ENCODE measurements at regions of chr6 and their contacts with region 1.

Region 1: DNA sequence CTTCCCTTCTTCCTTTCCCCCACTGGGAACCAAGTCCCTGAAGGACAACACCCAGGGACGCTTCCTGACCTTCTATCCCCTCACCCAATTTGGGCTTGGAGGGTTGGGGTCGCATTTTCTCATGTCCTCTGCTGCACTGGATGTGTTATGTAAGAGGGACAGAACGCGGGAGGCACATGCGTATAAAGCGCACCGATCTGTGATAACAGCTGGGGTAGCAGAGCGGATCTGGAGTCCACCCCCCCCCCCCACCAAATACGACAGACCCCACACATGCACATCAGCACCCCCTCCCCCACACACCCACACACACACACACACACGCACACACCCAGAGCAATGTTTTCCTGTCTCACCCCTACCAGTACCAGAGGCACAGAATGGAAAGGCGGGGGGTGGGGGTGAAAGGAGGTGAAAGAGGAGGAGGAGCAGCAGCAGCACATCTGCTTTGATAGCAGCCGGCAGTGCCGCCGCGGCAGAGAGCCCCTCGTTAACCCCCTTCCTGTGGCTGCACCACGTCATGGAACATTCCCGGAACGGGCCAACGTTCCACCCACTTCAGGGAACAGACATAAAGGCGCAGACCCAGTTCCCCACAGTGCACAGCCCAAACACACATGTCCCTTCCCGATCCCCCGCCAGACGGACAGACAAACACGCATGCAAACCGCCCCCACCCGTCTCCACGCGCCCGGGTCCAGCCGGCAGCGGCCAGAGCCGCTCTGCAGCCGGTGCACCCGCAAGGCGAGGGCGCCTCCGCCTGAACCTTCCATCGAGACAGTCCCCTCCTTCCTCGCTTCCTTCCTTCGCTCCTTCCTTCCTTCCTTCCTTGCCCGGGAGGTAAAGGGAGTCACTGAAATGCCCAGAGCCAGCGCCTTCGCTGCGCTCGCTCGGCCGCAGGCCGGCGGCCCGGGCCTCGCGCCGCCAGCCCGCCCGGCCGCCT is 581 bp downstream of the HIVEP2 start:
- DNase-seq: peak; percentile 94
- H3K4me3 Mint-ChIP-seq: peak overlapping the region; percentile 99
- H3K27ac Mint-ChIP-seq: peak overlapping the region; percentile 99
- H3K4me1 Mint-ChIP-seq: peaks cover 55% of the 10 kb centered on the region
- H3K27me3 Mint-ChIP-seq: no peaks in the 10 kb centered on the region

Region 2: DNA sequence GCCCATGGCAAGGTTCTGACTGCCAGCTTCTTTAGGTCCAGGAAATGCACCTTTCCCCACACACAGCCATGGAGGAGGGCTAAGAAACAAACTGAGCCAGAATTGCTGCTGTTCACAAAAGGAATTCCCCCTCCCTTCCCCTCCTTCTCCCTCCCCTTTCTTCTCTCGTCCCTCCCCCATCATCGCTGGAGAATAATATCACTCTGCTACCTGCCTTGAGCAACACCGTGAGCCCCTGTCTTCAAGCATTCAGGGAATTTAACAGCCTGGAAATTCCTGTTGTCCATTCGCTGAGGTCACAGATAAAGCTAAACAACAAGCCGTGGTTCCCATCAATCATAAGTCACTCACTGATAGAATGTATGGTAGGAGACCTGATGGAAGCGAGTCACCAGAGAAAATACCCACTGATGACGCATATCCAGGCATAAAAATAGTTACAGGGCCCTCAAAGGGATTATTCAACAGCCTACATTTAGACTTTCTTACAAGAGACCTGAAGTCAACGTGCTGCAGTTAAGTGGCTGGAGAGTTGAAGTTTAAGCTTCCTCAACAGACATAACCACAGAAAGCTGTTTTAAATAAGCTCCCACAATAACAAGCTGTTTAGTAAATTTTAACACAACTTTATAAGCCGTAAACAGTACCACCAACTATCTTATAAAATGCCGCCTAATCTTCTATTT is 59.1 kb before region 1 on chr6:
- CTCF ChIA-PET with region 1: interaction called, 11 read pairs
- DNase-seq: peak; percentile 51
- H3K4me3 Mint-ChIP-seq: peak overlapping the region; percentile 94
- H3K27ac Mint-ChIP-seq: peak overlapping the region; percentile 99
- H3K4me1 Mint-ChIP-seq: peaks cover 82% of the 10 kb centered on the region
- H3K27me3 Mint-ChIP-seq: no peaks in the 10 kb centered on the region

Region 3: DNA sequence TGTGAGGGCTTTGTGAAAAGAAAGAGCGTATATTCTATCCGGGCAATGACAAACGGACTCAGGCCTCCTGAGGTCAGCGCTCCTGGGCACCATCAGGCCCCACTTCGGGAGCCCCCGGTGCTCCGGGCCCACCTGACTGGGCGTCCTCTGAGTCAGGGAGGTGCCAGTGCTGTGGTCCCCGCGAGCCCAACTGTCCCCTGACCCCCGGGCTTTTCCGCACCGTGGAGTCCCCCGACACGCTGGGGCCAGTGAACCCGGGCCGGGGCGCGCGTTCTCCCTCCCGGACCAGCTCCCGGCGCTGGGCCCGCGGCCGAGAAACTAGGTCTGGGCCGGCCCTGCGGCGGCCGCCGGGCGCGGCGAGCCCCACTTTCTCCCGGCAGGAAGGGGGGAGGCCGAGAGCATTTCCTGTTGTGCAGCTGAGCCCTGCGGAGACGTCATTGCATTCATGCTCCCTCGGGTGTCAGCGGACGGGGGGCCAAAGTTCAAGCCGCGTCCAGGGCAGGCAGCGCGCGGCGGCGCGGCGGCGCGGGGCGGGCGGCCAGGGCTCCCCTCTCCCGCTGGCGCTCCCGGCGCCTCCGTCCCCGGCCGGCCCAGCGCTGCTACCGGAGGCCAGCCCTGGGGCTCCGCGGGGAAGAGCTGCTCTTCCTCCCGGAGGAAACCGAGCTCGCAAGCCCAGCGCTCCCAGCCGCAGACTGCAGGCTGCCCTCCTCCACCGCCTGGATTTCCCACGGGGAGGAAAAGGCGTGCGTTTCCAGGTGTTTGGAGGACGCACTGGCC is 17.7 kb before region 1 on chr6:
- CTCF ChIA-PET with region 1: interaction called, 39 read pairs
- DNase-seq: peak; percentile 91
- H3K4me3 Mint-ChIP-seq: peak overlapping the region; percentile 93
- H3K27ac Mint-ChIP-seq: peak overlapping the region; percentile 93
- H3K4me1 Mint-ChIP-seq: peaks cover 57% of the 10 kb centered on the region
- H3K27me3 Mint-ChIP-seq: no peaks in the 10 kb centered on the region

Region 4: GRCh38 chr6:142960098-142960497 is 15.7 kb after region 1 on chr6:
- CTCF ChIA-PET with region 1: no interaction called
- DNase-seq: no peak
- H3K4me3 Mint-ChIP-seq: no peak overlapping the region
- H3K27ac Mint-ChIP-seq: no peak overlapping the region
- H3K4me1 Mint-ChIP-seq: no peaks in the 10 kb centered on the region
- H3K27me3 Mint-ChIP-seq: no peaks in the 10 kb centered on the region

Region 5: GRCh38 chr6:143049611-143050010 is 105.2 kb after region 1 on chr6:
- CTCF ChIA-PET with region 1: no interaction called
- DNase-seq: no peak
- H3K4me3 Mint-ChIP-seq: no peak overlapping the region
- H3K27ac Mint-ChIP-seq: no peak overlapping the region
- H3K4me1 Mint-ChIP-seq: peaks cover 3% of the 10 kb centered on the region
- H3K27me3 Mint-ChIP-seq: peaks cover 10% of the 10 kb centered on the region

Measured in activated naive CD4-positive, alpha-beta T cell treated with anti-CD3 and anti-CD28 coated beads, Interleukin-2, amount 10 ng/mL, durations not matched to agents 7 days and 5 days (primary cell).